AG04450 (cell line): ENCODE measurements at regions of chr12 and their contacts with region 1.

Region 1: DNA sequence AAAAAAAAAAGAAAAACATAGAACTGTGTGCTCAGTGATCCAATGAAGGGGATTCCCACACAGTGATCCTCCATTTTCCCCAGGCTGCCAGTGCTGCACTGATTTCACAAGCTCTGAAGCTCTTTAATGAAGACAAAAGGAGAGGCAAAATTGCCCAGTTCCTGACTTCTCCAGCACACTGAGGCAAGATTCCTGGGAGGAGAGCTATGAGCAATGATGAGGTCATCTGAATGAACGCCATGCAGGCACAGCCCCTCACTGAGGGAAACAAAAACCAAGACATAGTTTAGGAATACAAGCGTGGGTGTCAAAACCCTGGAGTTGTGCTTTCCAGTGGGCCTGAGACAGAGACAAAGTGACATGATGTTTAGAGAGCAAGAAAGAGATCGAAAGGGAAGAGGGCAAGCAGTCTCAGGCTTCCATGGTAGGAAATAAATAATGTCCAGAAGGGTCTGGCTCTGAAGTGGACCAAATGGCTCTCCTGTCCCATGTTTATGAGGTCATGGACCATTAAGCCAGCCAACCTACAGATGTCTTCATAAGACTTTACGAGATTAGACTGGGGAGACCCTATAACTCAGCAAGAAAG is 40.9 kb upstream of the SMUG1 start:
- DNase-seq: peak; percentile 92
- H3K4me3 ChIP-seq: no peak overlapping the region
- H3K27ac ChIP-seq: peak overlapping the region; percentile 82
- H3K27me3 ChIP-seq: no peaks in the 10 kb centered on the region
- CTCF ChIP-seq: no peak

Region 2: GRCh38 chr12:54259194-54260011 is 29.7 kb after region 1 on chr12:
- CTCF ChIA-PET with region 1: no interaction called
- POLR2A ChIA-PET with region 1: interaction called, 11 read pairs
- DNase-seq: peak; percentile 63
- H3K4me3 ChIP-seq: peak overlapping the region; percentile 39
- H3K27ac ChIP-seq: peak overlapping the region; percentile 90
- H3K27me3 ChIP-seq: no peaks in the 10 kb centered on the region
- CTCF ChIP-seq: no peak